ENCODE measurements at regions of chr6 and their contacts with region 1.

Region 1: DNA sequence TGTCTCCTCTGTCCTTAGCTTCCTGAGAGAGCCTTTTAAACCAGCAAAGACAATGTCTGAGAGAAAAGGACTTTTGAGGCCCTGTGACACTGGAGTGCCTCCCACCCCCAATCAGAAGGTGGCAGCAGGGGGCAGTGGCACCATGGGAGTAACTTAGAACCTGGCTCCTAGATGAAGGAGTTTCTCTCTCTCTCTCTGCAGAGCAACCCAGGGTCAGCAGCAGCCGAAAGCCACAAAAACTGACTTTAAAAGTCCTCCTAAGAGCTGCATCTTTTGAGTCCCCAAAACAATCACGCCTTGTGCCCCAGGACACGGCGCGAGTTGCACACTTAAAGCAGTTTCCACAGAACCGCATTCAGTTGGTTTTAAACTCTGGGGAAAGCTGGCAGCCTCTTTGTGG is 5.3 kb upstream of the TCP11 start:
- H3K4me3 ChIP-seq: no peak overlapping the region
- H3K27ac ChIP-seq: no peak overlapping the region
- H3K4me1 ChIP-seq: peaks cover 2% of the 10 kb centered on the region; the same call in 1 of the 2 replicates
- CTCF ChIP-seq: peak; percentile 79

Region 2: GRCh38 chr6:34773916-34774315 is 372.5 kb before region 1 on chr6:
- CTCF ChIA-PET with region 1: no interaction called
- POLR2A ChIA-PET with region 1: no interaction called
- H3K4me3 ChIP-seq: no peak overlapping the region
- H3K27ac ChIP-seq: no peak overlapping the region
- H3K4me1 ChIP-seq: no peaks in the 10 kb centered on the region
- CTCF ChIP-seq: no peak

Region 3: GRCh38 chr6:35161776-35162607 is 15.5 kb after region 1 on chr6:
- CTCF ChIA-PET with region 1: interaction called, 25 read pairs
- POLR2A ChIA-PET with region 1: no interaction called
- H3K4me3 ChIP-seq: no peak overlapping the region
- H3K27ac ChIP-seq: no peak overlapping the region
- H3K4me1 ChIP-seq: no peaks in the 10 kb centered on the region; the same call in 1 of the 2 replicates
- CTCF ChIP-seq: no peak

Region 4: DNA sequence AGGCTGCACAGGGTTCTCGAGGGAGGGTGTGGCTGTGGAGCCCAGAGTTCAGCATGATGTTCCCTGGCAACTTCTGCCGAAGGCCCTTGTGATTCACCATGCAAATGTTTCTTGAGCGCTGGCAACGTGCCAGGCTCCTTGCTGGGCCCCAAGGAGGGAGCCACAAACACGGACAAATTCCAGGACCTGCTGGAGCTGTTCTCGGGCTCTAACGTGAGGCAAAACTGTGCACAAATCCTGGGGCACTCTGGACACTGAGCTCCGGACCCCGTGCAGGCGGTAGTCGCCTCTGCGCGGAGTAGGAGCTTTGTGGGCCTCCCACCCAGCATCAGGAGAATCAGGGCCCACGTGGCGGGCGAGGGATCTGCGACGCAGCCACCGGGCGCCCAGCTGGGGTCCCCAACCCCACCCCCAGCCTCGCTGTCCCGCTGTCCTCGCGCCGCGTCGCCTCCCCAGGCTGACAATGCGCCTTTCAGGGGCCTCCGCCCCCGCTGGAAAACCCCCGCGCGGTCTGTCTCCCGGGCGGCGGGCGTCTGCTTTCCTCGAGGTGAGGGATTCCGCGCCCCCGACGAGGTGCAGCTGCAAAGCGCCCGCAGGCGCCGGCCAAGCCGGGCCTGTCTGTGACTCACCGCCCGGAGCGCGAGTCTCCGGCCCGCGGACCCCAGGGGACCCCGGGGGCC is 35.6 kb after region 1 on chr6:
- CTCF ChIA-PET with region 1: interaction called, 11 read pairs
- POLR2A ChIA-PET with region 1: no interaction called
- H3K4me3 ChIP-seq: peak overlapping the region; percentile 9
- H3K27ac ChIP-seq: peak overlapping the region; percentile 40; the same call in 1 of the 2 replicates
- H3K4me1 ChIP-seq: peaks cover 8% of the 10 kb centered on the region
- CTCF ChIP-seq: no peak

Region 5: GRCh38 chr6:35230950-35231349 is 84.5 kb after region 1 on chr6:
- CTCF ChIA-PET with region 1: interaction called, 191 read pairs
- POLR2A ChIA-PET with region 1: interaction called, 6 read pairs
- H3K4me3 ChIP-seq: no peak overlapping the region
- H3K27ac ChIP-seq: no peak overlapping the region
- H3K4me1 ChIP-seq: peaks cover 9% of the 10 kb centered on the region; the same call in 1 of the 2 replicates
- CTCF ChIP-seq: no peak

Region 6: GRCh38 chr6:35247642-35248231 is 101.3 kb after region 1 on chr6:
- CTCF ChIA-PET with region 1: interaction called, 191 read pairs
- POLR2A ChIA-PET with region 1: no interaction called
- H3K4me3 ChIP-seq: no peak overlapping the region
- H3K27ac ChIP-seq: no peak overlapping the region
- H3K4me1 ChIP-seq: no peaks in the 10 kb centered on the region
- CTCF ChIP-seq: no peak

Measured in HEK293 (cell line).